Activated CD8-positive, alpha-beta T cell treated with anti-CD3 and anti-CD28 coated beads for 36 hours (primary cell): ENCODE measurements at regions of chr2 and their contacts with region 1.

Region 1: GRCh38 chr2:64052468-64053241 is 33.4 kb upstream of the VPS54 start:
- DNase-seq: no peak
- ATAC-seq: no peak
- H3K4me3 Mint-ChIP-seq: no peak overlapping the region
- H3K27ac Mint-ChIP-seq: no peak overlapping the region
- H3K4me1 Mint-ChIP-seq: peaks cover 40% of the 10 kb centered on the region
- H3K27me3 Mint-ChIP-seq: no peaks in the 10 kb centered on the region
- CTCF ChIP-seq: no peak

Region 2: DNA sequence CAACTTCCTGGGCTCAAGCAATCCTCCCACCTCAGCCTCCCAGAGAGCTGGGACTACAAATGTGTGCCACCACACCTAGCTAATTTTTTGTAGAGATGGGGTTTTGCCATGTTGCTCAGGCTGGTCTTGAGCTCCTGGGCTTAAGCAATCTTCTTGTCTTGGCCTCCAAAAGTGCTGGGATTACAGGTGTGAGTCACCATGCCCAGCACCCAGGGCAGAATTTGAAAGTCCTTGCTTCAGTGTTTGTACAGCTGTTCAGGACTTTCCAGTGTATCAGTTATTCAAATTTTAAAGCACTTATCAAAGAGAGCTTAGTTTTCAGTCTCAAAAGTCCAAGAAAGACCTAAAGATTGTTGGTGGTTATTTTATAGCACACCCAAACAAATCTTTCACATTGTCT is 10.2 kb after region 1 on chr2:
- CTCF ChIA-PET with region 1: interaction called, 13 read pairs
- POLR2A ChIA-PET with region 1: no interaction called
- intact Hi-C with region 1: no loop called
- DNase-seq: peak; percentile 26
- ATAC-seq: no peak
- H3K4me3 Mint-ChIP-seq: no peak overlapping the region
- H3K27ac Mint-ChIP-seq: peak overlapping the region; percentile 31
- H3K4me1 Mint-ChIP-seq: peaks cover 31% of the 10 kb centered on the region
- H3K27me3 Mint-ChIP-seq: no peaks in the 10 kb centered on the region
- CTCF ChIP-seq: no peak

Region 3: GRCh38 chr2:64086347-64087082 is 33.9 kb after region 1 on chr2:
- CTCF ChIA-PET with region 1: no interaction called
- POLR2A ChIA-PET with region 1: no interaction called
- intact Hi-C with region 1: no loop called
- DNase-seq: no peak
- ATAC-seq: peak; percentile 31
- H3K4me3 Mint-ChIP-seq: no peak overlapping the region
- H3K27ac Mint-ChIP-seq: no peak overlapping the region
- H3K4me1 Mint-ChIP-seq: peaks cover 13% of the 10 kb centered on the region
- H3K27me3 Mint-ChIP-seq: peaks cover under 1% of the 10 kb centered on the region
- CTCF ChIP-seq: no peak